ENCODE measurements at regions of chr13 and their contacts with region 1.

Region 1: DNA sequence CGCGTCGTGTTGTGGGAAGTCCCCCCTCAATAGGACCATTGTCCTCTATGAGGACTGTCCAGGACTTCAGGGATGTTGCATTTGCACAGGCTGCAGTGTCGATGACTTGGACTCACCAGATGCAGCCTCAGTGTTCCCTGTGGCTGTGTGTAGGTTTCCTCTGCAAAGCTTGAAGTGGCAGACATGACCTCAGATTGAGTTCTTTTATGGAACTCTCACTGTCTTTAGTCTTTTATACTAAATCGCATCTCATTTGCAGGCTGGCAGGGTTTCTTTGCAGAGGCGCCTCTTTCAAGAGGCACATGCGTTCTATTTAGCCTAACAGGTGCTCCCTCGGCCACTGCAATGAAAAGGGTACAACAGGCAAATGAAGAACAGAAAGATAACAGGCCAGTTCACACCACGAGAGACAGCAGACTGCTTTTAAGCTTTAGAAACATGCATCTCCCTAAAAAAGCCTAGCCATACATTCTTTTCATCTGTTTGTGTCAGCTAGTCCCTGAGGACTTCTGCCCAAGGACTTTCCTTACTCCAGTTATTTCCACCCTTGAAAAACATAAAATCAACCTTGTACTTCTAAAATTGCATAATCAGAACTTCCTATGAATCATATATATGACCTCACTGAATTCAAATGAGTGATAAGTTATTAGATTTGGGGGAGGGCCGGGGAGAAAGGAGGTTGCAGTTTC is 118.4 kb downstream of the RAB20 start:
- DNase-seq: no peak

Region 2: DNA sequence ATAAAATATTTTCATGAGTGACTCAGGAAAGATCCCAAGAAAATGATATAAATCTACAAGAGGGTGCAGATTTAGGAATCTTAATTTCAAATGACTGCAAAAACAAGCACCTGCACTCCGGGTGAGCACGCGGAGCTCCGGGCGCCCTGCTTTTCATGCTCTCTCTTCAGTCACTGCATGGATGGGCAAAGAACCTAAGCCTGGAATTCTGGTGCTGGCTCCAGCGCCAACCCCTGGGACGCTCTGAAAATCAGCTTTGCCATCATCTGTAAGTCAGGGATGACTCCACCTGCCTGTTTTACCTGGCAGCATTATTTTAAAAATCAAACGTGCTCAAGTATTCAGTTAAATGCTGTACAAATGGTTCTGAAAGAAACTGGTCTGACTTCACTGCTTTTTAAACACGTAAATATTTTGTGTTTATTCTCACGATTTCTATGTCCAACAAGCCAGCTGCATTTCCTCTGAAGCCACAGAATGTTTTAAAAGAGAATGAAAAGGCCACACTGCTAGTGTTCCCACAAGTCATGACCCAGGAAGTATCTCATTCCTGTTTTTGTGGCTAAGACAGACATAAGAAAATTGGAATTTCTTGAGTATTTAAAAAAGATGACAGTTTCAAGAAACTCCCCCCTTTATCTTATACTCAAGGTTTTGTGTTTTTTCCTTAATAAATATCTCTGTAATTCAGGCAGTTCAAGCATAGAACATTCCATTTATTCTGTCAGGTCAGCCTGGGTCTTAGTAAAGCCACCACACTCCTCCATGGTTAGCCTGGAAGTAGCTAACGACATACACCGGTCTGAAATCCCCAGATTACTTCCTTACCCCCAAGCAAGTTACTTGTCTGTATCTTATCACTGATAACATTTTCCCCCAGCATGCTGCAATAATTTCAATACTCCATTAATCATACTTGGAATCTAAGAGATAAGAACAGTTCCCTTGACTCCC is 217.2 kb before region 1 on chr13:
- intact Hi-C with region 1: loop called (anchors 2 kb)
- DNase-seq: no peak

Measured in cardiac septum (tissue), 1 donor.